ENCODE measurements at regions of chr20 and their contacts with region 1.

Region 1: DNA sequence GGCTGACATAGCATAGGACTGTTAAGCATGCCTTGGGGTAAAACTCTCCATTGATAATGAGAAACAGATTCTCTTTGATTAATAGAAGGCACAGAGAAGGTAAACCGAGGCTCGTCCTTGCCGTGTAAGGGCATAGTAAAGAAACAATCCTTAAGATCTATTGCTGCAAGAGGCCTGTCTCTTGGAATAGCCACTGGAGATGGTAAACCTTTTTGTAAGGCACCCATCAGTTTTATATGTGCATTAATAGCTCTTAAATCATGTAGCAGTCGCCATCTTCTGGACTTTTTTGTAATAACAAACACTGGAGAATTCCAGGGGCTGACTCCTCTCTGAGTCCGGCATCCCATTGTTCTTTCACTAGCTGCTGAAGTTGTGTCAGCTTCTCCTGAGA is 8.4 kb upstream of the ABHD12 start:
- DNase-seq: no peak
- H3K4me3 Mint-ChIP-seq: no peak overlapping the region
- H3K27ac Mint-ChIP-seq: no peak overlapping the region
- H3K4me1 Mint-ChIP-seq: no peaks in the 10 kb centered on the region
- H3K27me3 Mint-ChIP-seq: peaks cover 14% of the 10 kb centered on the region

Region 2: GRCh38 chr20:25081065-25081729 is 317.8 kb before region 1 on chr20:
- intact Hi-C with region 1: loop called (anchors 5 kb)
- DNase-seq: no peak
- H3K4me3 Mint-ChIP-seq: no peak overlapping the region
- H3K27ac Mint-ChIP-seq: no peak overlapping the region
- H3K4me1 Mint-ChIP-seq: peaks cover 9% of the 10 kb centered on the region
- H3K27me3 Mint-ChIP-seq: peaks cover 77% of the 10 kb centered on the region

Region 3: GRCh38 chr20:25178563-25179438 is 220.2 kb before region 1 on chr20:
- intact Hi-C with region 1: loop called (anchors 1 kb)
- DNase-seq: no peak
- H3K4me3 Mint-ChIP-seq: no peak overlapping the region
- H3K27ac Mint-ChIP-seq: no peak overlapping the region
- H3K4me1 Mint-ChIP-seq: no peaks in the 10 kb centered on the region
- H3K27me3 Mint-ChIP-seq: peaks cover 30% of the 10 kb centered on the region

Region 4: GRCh38 chr20:25294459-25295385 is 104.3 kb before region 1 on chr20:
- intact Hi-C with region 1: loop called (anchors 1 kb)
- DNase-seq: peak; percentile 35
- H3K4me3 Mint-ChIP-seq: no peak overlapping the region
- H3K27ac Mint-ChIP-seq: no peak overlapping the region
- H3K4me1 Mint-ChIP-seq: no peaks in the 10 kb centered on the region
- H3K27me3 Mint-ChIP-seq: no peaks in the 10 kb centered on the region

Region 5: DNA sequence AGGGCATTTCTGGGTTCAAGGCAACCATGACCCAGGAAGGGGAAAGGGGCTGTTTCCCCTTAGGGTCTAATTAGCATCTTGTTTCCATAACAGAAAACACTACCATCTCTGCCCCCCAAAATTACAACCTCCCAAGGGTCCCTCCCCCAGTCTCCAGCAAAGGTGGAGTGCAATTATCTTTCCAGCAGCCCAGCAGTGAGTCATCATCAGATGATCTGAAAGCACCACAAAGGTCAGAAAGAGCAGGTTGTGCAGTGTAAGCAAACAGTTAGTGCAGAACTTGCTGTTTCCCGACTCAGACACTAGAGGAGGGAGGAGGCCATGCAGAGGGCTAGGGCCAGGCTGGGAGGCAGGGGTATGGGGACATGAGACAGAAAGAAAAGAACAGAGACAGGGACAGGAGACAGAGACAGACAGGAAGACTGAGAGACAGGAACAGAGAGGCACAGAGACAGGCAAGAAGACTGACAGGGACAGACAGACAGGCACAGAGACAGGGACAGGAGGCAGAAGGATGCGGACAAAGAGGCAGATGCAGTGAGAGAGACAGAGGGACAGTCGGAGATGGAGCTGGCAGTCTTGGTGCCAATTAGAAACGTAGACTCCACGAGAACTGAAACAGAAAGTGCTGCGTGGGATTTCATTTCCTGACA is 88.6 kb before region 1 on chr20:
- intact Hi-C with region 1: loop called (anchors 1 kb)
- DNase-seq: peak; percentile 61
- H3K4me3 Mint-ChIP-seq: peak overlapping the region; percentile 81
- H3K27ac Mint-ChIP-seq: peak overlapping the region; percentile 98
- H3K4me1 Mint-ChIP-seq: peaks cover 46% of the 10 kb centered on the region
- H3K27me3 Mint-ChIP-seq: no peaks in the 10 kb centered on the region